K562 (cell line): ENCODE measurements at regions of chr17 and their contacts with region 1.

Region 1: GRCh38 chr17:39547713-39548478 is 59.8 kb downstream of the NEUROD2 start:
- DNase-seq: peak; percentile 75 to 79 (median 76)
- ATAC-seq: peak; percentile 95
- H3K4me3 ChIP-seq: no peak overlapping the region
- H3K27ac ChIP-seq: no peak overlapping the region
- H3K4me1 ChIP-seq: no peaks in the 10 kb centered on the region
- H3K27me3 ChIP-seq: no peaks in the 10 kb centered on the region
- CTCF ChIP-seq: peak; percentile 86 to 97 (median 88)
- EP300 ChIP-seq: no peak
- POLR2A ChIP-seq: no peak
- RAD21 ChIP-seq: peak; percentile 51 to 79; a peak in 3 of 4 replicates

Region 2: GRCh38 chr17:39527220-39527813 is 20.6 kb before region 1 on chr17:
- CTCF ChIA-PET with region 1: interaction called, 6 read pairs
- POLR2A ChIA-PET with region 1: no interaction called
- in situ Hi-C with region 1: no loop called
- intact Hi-C with region 1: loop called (anchors 2 kb)
- DNase-seq: peak; percentile 22 to 52 (median 32)
- ATAC-seq: peak; percentile 90
- H3K4me3 ChIP-seq: no peak overlapping the region
- H3K27ac ChIP-seq: no peak overlapping the region
- H3K4me1 ChIP-seq: peaks cover 3 to 8% of the 10 kb centered on the region in 2 experiments; a peak in 2 of 5 replicates
- H3K27me3 ChIP-seq: no peaks in the 10 kb centered on the region
- CTCF ChIP-seq: peak; percentile 52 to 68 (median 58); a peak in 4 of 6 replicates
- EP300 ChIP-seq: no peak
- POLR2A ChIP-seq: no peak
- RAD21 ChIP-seq: peak; percentile 24 to 63; a peak in 3 of 4 replicates

Region 3: DNA sequence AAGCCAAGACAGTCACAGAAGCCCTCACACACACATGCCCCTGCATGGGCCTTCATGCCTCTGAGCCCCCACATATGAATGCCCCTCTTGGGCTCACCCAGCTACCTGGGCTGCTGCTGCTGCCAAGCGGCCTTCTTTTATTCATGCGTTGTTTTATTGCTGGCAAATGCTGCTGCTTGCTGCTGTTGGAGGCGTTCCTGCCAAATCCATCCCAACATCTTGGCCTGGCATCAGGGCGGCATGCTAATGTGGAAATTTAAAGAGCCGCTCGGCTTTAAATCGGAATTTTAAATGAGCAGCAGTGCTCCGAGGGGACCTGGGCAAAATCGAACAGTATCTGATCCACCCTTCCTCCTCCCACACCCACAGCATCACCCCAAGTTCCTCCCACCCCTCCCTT is 20.8 kb after region 1 on chr17:
- CTCF ChIA-PET with region 1: no interaction called
- POLR2A ChIA-PET with region 1: no interaction called
- in situ Hi-C with region 1: no loop called
- intact Hi-C with region 1: no loop called
- DNase-seq: no peak
- ATAC-seq: no peak
- H3K4me3 ChIP-seq: no peak overlapping the region
- H3K27ac ChIP-seq: no peak overlapping the region
- H3K4me1 ChIP-seq: peaks cover 0 to 7% of the 10 kb centered on the region in 2 experiments; a peak in 2 of 5 replicates
- H3K27me3 ChIP-seq: no peaks in the 10 kb centered on the region
- CTCF ChIP-seq: no peak
- EP300 ChIP-seq: no peak
- POLR2A ChIP-seq: no peak
- RAD21 ChIP-seq: no peak

Region 4: GRCh38 chr17:39754161-39754951 is 206.5 kb after region 1 on chr17:
- CTCF ChIA-PET with region 1: interaction called, 14 read pairs
- POLR2A ChIA-PET with region 1: no interaction called
- in situ Hi-C with region 1: no loop called
- intact Hi-C with region 1: no loop called
- DNase-seq: peak; percentile 84 to 96 (median 96)
- ATAC-seq: peak; percentile 96
- H3K4me3 ChIP-seq: peak overlapping the region; percentile 53
- H3K27ac ChIP-seq: peak overlapping the region; percentile 64
- H3K4me1 ChIP-seq: peaks cover 9 to 43% of the 10 kb centered on the region in 2 experiments; a peak in 4 of 5 replicates
- H3K27me3 ChIP-seq: peaks cover 4 to 6% of the 10 kb centered on the region in 2 experiments; a peak in 2 of 5 replicates
- CTCF ChIP-seq: peak; percentile 82 to 93 (median 92)
- EP300 ChIP-seq: no peak; the same call in 1 of the 2 replicates
- POLR2A ChIP-seq: peak; percentile 66
- RAD21 ChIP-seq: peak; percentile 88 to 95

Region 5: DNA sequence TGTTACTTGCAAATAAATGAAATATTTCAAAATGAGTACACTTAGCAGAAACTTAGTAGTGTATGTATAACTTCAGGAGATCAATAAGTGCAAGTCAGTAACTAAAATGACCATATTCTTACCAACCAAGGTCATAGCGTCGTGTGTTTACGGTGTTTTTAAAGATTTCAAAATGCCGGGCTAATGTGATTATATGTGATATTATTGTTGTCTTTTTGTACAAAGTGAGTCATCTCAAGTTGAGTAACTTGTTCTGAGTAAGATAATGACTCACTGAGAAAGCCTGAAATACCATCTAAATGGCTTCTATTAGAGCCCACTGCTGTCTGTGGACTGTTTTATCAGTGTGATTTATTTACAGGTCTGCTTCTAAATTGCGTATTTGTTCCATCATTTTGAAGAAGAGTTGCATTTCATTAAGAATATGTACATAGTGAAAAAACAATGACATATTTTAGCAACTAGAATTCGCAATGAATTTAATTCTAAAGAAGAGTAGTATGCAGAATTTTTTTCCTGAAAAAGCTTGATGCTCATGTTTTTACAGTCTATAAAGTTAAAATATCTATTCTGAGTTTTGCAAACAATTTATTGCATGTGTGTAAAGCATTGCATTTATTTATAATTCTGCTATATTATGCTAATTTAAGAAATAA is 1306.4 kb after region 1 on chr17:
- CTCF ChIA-PET with region 1: no interaction called
- POLR2A ChIA-PET with region 1: no interaction called
- in situ Hi-C with region 1: no loop called
- intact Hi-C with region 1: no loop called
- DNase-seq: peak; percentile 31 to 66 (median 38)
- ATAC-seq: peak; percentile 76
- H3K4me3 ChIP-seq: no peak overlapping the region
- H3K27ac ChIP-seq: peak overlapping the region; percentile 66; the same call in 1 of the 3 replicates
- H3K4me1 ChIP-seq: peaks cover 0 to 19% of the 10 kb centered on the region in 2 experiments; a peak in 3 of 5 replicates
- H3K27me3 ChIP-seq: no peaks in the 10 kb centered on the region
- CTCF ChIP-seq: no peak
- EP300 ChIP-seq: peak; percentile 80
- POLR2A ChIP-seq: no peak
- RAD21 ChIP-seq: no peak